ENCODE measurements at regions of chr3 and their contacts with region 1.

Region 1: GRCh38 chr3:101849051-101849720 is at the start of gene NFKBIZ:
- DNase-seq: peak; percentile 94
- H3K4me3 Mint-ChIP-seq: peak within 1 kb of the TSS; percentile 75
- H3K27ac Mint-ChIP-seq: peak within 1 kb of the TSS; percentile 92
- H3K4me1 Mint-ChIP-seq: peaks cover 24% of the 10 kb centered on the region
- H3K27me3 Mint-ChIP-seq: no peaks in the 10 kb centered on the region
- CTCF ChIP-seq: no peak
- total RNA-seq, gene NFKBIZ: 217 and 227 TPM in 2 replicates

Region 2: GRCh38 chr3:101809178-101810021 is 39.8 kb before region 1 on chr3:
- CTCF ChIA-PET with region 1: no interaction called
- intact Hi-C with region 1: loop called (anchors 5 kb)
- DNase-seq: peak; percentile 34
- H3K4me3 Mint-ChIP-seq: no peak overlapping the region
- H3K27ac Mint-ChIP-seq: no peak overlapping the region
- H3K4me1 Mint-ChIP-seq: no peaks in the 10 kb centered on the region
- H3K27me3 Mint-ChIP-seq: no peaks in the 10 kb centered on the region
- CTCF ChIP-seq: peak; percentile 47

Region 3: GRCh38 chr3:101827211-101828174 is 21.7 kb before region 1 on chr3:
- CTCF ChIA-PET with region 1: no interaction called
- intact Hi-C with region 1: loop called (anchors 1 kb)
- DNase-seq: peak; percentile 55
- H3K4me3 Mint-ChIP-seq: peak overlapping the region; percentile 79
- H3K27ac Mint-ChIP-seq: peak overlapping the region; percentile 64
- H3K4me1 Mint-ChIP-seq: peaks cover 24% of the 10 kb centered on the region
- H3K27me3 Mint-ChIP-seq: no peaks in the 10 kb centered on the region
- CTCF ChIP-seq: no peak

Region 4: DNA sequence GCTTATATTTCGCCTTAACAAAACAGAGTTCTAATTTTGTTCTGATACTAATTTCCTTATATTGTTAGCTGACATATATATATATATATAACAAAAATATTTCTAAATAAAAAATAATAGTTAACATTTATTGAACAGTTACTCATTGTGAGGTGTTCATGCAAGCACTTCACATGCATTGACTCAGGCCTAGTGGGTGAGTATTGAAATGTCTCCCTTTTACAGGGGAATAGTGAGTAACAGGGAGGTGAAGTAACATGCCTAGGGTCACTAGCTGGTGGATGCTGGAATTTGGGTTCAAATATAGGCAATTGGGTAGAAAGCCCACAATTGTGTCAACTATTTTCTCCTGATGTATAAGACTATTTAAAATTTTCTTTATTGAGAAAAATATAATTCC is 483.0 kb after region 1 on chr3:
- CTCF ChIA-PET with region 1: interaction called, 10 read pairs
- intact Hi-C with region 1: no loop called
- DNase-seq: no peak
- H3K4me3 Mint-ChIP-seq: no peak overlapping the region
- H3K27ac Mint-ChIP-seq: no peak overlapping the region
- H3K4me1 Mint-ChIP-seq: no peaks in the 10 kb centered on the region
- H3K27me3 Mint-ChIP-seq: no peaks in the 10 kb centered on the region
- CTCF ChIP-seq: no peak

Measured in Calu3 (cell line).